ENCODE measurements at regions of chr11 and their contacts with region 1.

Region 1: DNA sequence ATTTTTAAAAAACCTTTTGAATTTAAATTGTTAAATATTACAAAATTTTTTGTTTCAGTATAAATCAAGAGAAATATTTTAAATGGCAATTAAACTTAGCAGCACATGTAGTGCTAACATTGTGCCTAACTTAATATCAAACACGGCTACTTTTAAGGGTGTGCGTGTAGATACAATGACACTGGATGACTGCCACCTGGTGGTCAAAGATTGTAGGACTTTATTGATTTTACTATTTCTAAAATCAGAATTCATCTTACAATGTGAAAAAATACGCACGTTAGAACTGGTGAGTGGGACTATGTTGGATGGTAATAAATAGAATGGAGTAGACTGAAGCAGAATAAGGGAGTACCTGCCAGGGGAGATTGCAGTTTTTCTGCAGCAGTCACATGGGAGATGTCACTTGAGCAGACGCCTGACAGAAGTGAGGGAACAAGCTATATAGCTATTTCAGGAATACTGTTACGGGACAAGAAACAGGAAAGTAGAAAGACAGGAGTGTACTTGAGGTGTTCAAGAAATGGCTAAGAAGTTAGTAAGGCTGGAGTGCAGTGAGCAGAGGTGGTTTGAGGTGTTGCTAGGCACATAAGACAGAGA is 52.9 kb downstream of the UVRAG start:
- DNase-seq: peak in 5 of 7 donors; percentile 42 to 67 (median 64)
- H3K4me3 ChIP-seq: no peak overlapping the region
- H3K27ac ChIP-seq: no peak overlapping the region
- H3K4me1 ChIP-seq: peaks cover 7 to 22% of the 10 kb centered on the region in 2 donors
- H3K27me3 ChIP-seq: no peaks in the 10 kb centered on the region
- CTCF ChIP-seq: peak; percentile 81 to 90 (median 83)
- POLR2A ChIP-seq: no peak

Region 2: GRCh38 chr11:75721855-75722668 is 145.8 kb before region 1 on chr11:
- intact Hi-C with region 1: loop called (anchors 5 to 10 kb)
- DNase-seq: peak in 2 of 7 donors; percentile 16 to 21
- H3K4me3 ChIP-seq: no peak overlapping the region
- H3K27ac ChIP-seq: no peak overlapping the region
- H3K4me1 ChIP-seq: no peaks in the 10 kb centered on the region
- H3K27me3 ChIP-seq: no peaks in the 10 kb centered on the region
- CTCF ChIP-seq: no peak
- POLR2A ChIP-seq: no peak

Region 3: DNA sequence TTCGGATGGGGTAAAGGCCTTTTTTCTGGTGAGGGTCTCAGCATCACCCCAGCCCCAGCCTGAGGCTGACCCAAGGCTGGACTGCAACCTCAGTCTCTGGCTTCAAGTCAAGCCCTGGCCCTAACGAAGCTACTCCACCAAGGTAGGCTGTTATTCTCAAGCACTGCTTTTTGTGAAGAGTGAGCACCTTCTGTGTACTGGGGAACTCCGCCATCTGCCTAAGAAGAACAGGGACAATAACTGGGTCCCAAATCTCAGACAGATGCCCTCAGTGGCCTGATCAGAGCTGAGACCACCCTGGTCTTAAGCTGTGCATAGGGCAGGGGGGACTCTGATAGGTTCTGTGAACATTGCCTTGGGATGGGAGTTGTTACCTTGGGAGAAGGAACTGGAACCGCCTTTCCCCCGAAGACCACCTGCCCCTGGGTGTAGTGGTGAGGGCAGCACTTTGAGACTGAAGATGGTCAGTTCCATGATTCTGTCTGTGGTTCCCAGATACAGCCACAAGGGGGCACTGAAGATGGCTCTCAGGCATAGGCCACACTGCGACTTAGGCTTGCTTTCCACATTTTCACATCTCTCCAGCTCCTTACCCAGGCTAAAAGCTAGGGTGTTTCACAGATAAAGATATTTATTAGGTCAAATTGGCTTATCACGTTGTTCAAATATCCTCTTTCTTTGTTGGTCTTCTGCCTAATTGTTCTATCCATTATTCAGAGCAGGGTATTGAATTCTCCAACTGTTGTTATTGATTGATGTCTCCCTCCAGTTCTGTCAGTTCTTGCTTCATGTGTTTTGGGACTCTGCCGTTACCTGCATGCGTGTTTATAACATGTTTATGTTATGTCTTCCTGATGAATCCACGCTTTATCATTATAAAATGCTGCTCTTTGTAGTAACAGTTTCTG is 64.7 kb before region 1 on chr11:
- intact Hi-C with region 1: loop called (anchors 5 kb)
- DNase-seq: peak; percentile 71 to 94 (median 84)
- H3K4me3 ChIP-seq: no peak overlapping the region
- H3K27ac ChIP-seq: peak overlapping the region in 2 of 5 donors; percentile 54 to 64
- H3K4me1 ChIP-seq: peaks cover 0 to 17% of the 10 kb centered on the region in 2 donors
- H3K27me3 ChIP-seq: no peaks in the 10 kb centered on the region
- CTCF ChIP-seq: peak; percentile 80 to 97 (median 93)
- POLR2A ChIP-seq: no peak

Region 4: DNA sequence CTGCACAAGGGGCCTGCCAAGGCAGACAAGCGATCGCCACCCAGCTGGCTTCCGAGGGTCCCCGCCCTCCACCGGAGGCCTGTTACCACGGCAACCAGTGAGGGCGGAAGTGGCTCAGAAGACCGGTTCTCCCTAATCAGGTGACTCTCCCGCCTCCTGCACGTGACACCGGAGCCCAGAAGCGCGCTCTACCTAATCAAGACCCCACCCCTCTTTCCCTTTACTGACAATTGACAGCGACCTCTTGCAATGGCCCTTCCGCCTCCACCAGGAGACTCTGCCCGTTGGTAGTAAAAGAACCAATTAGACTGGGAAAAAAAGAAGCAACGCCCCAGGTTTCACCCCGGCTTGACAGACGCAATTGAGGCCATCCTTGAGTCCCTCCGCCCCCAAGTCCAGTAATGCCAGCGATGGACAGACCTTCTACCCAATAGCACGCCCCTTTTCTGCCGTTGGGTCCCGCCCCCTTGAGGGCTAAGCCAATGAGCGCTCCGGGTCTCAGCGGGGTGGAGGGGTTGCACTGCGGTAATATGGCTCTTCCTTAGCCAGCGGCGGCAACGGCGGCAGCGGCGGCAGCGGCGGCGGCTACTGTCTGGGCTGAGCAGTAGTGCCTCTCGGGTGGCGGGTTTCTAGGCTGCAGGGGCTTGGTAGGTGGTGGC is 53.1 kb before region 1 on chr11 and contains the start of gene UVRAG:
- intact Hi-C with region 1: loop called in 1 of 2 experiments (anchors 2 kb)
- DNase-seq: peak; percentile 99 to 100 (median 100)
- H3K4me3 ChIP-seq: peak within 1 kb of the TSS; percentile 57 to 96 (median 71)
- H3K27ac ChIP-seq: peak within 1 kb of the TSS; percentile 19 to 96 (median 95)
- H3K4me1 ChIP-seq: peaks cover 14 to 25% of the 10 kb centered on the region in 2 donors
- H3K27me3 ChIP-seq: no peaks in the 10 kb centered on the region
- CTCF ChIP-seq: peak in 5 of 6 experiments; percentile 9 to 44 (median 40)
- POLR2A ChIP-seq: peak; percentile 90 to 96
- total RNA-seq, gene UVRAG: 16.5 to 61.4 (median 32.1) TPM

Region 5: DNA sequence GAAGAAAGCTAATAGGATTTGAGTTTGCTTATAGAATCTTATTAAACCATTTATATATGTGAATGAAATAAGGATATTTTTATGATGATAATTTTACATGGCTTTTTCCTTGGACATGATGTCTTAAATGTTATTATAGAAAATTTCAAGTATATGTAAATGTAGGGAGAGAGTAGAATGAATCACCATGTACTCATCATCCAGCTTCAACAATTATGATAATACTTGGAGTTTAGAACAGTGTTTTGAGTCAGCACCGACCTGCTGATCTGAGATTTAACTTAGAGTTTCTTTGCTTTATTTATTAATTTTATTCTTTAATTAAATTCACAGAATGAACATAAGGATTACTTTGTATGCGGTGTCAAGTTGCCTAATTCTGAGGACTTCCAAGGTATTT is 140.6 kb after region 1 on chr11:
- intact Hi-C with region 1: no loop called
- DNase-seq: no peak
- H3K4me3 ChIP-seq: no peak overlapping the region
- H3K27ac ChIP-seq: no peak overlapping the region
- H3K4me1 ChIP-seq: no peaks in the 10 kb centered on the region
- H3K27me3 ChIP-seq: no peaks in the 10 kb centered on the region
- CTCF ChIP-seq: no peak
- POLR2A ChIP-seq: no peak